Panc1 (cell line): ENCODE measurements at regions of chr1 and their contacts with region 1.

Region 1: DNA sequence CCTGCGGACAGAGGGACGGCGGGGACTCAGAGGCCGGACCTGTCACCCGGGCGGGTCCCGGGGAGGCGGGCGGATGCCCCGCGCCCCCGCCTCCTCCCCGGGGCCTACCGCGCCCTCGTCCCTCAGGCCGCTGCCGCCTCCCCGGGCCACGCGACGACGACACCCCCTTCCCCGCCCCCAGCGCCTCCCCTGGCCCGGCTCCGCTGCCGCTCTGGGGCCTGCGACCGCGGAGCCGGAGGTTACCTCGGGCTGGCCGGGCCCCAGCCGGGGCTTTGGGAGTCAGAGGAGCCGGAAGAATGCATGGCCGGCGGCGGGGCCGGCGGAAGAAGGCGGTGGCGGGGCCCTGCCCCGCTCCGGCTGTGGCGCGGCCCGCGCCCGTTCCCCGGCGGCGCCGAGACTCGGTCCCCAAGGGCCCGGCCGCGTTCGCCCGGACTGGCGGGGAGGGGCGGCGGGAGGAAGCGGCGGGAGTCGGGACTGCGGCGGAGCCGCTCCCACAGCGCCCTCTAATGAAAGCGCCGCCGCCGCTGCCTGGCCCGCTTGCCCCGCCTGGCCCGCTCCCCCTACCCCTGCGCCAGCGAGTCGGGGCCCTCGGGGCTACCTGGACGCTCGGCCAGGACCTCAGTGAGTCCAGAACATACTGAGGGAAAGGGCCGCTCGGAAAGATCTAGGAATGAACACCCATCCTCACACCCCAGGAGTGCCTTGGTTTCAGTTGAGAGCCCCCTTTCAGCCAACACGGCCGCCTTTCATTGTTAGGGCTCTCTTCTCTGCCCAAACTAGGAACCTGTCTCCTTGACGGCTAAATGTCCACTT is at the start of gene LPGAT1:
- DNase-seq: no peak
- ATAC-seq: peak; percentile 96
- H3K4me3 ChIP-seq: peak within 1 kb of the TSS; percentile 63 to 87
- H3K27ac ChIP-seq: peak within 1 kb of the TSS; percentile 92
- H3K4me1 ChIP-seq: peaks cover 30% of the 10 kb centered on the region
- H3K27me3 ChIP-seq: no peaks in the 10 kb centered on the region
- CTCF ChIP-seq: peak; percentile 91
- total RNA-seq, gene LPGAT1: 85.4 TPM

Region 2: DNA sequence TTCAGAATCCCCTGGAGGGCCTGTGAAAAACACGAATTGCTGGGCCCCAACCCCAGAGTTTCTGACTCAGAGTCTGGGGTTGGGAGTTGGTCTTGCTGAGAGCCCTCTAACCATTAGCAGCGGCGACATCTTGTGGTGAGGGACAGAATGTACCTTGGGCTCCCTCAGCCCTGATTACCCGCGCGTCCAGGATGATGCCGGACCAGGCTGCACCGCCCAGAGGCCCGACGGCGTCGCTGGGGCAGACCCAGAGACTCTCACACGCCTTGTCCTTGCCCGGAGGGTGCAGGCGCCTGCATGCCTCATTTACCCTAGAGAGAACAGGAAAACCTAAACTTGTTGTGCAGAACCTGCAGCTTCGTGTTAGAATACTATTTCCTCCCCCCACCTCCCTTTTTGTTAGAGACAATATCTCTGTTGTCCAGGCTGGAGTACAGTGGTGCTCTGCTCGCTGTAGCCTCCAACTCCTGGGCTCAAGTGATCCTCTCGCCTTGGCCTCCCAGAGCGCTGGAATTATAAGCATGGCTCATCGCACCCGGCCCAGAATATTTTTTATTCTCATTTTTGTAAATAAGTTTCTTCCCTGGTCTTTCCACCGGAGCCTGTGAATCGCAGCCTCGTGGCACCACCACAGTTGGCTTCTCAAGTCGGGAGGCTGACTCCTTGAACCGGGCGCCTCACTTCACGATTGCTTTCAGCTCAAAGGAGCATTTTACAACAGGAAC is 316.3 kb before region 1 on chr1:
- CTCF ChIA-PET with region 1: no interaction called
- POLR2A ChIA-PET with region 1: no interaction called
- in situ Hi-C with region 1: no loop called
- intact Hi-C with region 1: no loop called
- DNase-seq: peak; percentile 66
- ATAC-seq: peak; percentile 87
- H3K4me3 ChIP-seq: peak overlapping the region in 1 of 2 experiments; percentile 36; a peak in 2 of 4 replicates
- H3K27ac ChIP-seq: peak overlapping the region; percentile 70
- H3K4me1 ChIP-seq: peaks cover 22% of the 10 kb centered on the region
- H3K27me3 ChIP-seq: no peaks in the 10 kb centered on the region
- CTCF ChIP-seq: peak; percentile 91

Region 3: DNA sequence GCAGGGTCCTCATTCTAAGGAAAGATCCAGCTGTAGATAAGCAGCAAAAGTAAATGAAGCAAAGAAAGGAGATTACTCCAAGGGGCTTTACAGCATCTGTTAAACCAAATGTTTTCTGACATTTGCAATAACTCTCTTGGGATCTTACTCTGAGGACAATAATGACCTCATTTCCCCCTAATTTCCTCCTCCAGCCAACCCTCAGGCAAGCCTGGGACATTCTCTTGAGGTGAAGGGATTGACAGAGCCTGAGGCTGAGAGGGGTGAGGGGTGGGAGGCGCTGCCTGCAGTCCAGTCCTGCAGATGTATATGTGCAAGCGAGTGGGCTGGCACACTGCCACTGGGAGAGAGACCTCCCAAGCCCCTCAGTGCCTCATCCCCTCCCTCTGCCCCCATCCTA is 114.6 kb before region 1 on chr1:
- CTCF ChIA-PET with region 1: no interaction called
- POLR2A ChIA-PET with region 1: no interaction called
- in situ Hi-C with region 1: no loop called
- intact Hi-C with region 1: no loop called
- DNase-seq: no peak
- ATAC-seq: no peak
- H3K4me3 ChIP-seq: no peak overlapping the region
- H3K27ac ChIP-seq: no peak overlapping the region
- H3K4me1 ChIP-seq: 0 out of 2 replicates have a peak, but pooled peaks cover 3% of the 10 kb centered on the region
- H3K27me3 ChIP-seq: no peaks in the 10 kb centered on the region
- CTCF ChIP-seq: no peak

Region 4: GRCh38 chr1:211781260-211781659 is 49.3 kb before region 1 on chr1:
- CTCF ChIA-PET with region 1: no interaction called
- POLR2A ChIA-PET with region 1: no interaction called
- in situ Hi-C with region 1: no loop called
- intact Hi-C with region 1: no loop called
- DNase-seq: no peak
- ATAC-seq: no peak
- H3K4me3 ChIP-seq: no peak overlapping the region
- H3K27ac ChIP-seq: no peak overlapping the region
- H3K4me1 ChIP-seq: no peaks in the 10 kb centered on the region
- H3K27me3 ChIP-seq: no peaks in the 10 kb centered on the region
- CTCF ChIP-seq: no peak

Region 5: GRCh38 chr1:211874521-211875347 is 44.2 kb after region 1 on chr1:
- CTCF ChIA-PET with region 1: no interaction called
- POLR2A ChIA-PET with region 1: no interaction called
- in situ Hi-C with region 1: no loop called
- intact Hi-C with region 1: no loop called
- DNase-seq: no peak
- ATAC-seq: no peak
- H3K4me3 ChIP-seq: no peak overlapping the region
- H3K27ac ChIP-seq: no peak overlapping the region
- H3K4me1 ChIP-seq: no peaks in the 10 kb centered on the region
- H3K27me3 ChIP-seq: no peaks in the 10 kb centered on the region; the same call in 1 of the 2 replicates
- CTCF ChIP-seq: no peak

Region 6: DNA sequence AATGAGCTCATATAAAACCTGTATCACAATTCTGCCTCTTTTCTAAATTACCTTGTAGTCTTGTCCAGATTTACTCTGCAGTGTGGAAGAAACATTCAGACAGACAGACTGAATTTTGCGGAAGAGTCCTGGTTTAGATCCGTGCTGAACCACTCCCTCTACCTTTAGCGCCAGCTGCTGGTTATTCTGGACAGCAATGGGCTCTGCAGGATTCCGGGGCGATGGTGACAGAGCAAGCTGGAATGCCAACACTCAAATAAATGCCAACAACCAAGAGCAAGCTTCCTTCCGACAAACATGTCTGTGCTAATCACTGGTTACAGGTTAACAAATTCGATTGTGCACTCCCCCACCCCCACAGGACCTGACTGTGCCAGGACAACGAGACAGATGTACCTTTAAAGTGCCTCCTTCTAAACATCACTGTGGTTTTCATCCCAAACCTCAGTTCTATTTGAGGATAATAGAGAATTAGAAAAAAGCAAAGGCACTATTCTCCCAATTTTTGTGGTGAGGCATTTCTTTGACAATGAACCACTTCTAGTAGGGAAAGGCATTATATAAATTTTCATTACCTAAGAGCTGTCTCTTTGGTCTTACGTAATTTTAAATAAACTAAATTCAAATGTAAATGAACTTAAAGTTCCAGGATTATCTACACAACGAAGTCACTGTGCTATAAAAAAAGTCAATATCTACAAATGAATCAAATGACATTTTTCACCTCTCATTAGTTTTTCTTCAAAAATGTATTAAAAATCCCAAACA is 114.4 kb after region 1 on chr1:
- CTCF ChIA-PET with region 1: interaction called, 3 read pairs
- POLR2A ChIA-PET with region 1: no interaction called
- in situ Hi-C with region 1: no loop called
- intact Hi-C with region 1: loop called (anchors 10 kb)
- DNase-seq: no peak
- ATAC-seq: peak; percentile 92
- H3K4me3 ChIP-seq: no peak overlapping the region
- H3K27ac ChIP-seq: no peak overlapping the region
- H3K4me1 ChIP-seq: no peaks in the 10 kb centered on the region
- H3K27me3 ChIP-seq: no peaks in the 10 kb centered on the region
- CTCF ChIP-seq: peak; percentile 79